GM10248 (cell line): ENCODE measurements at regions of chr19 and their contacts with region 1.

Region 1: GRCh38 chr19:12965017-12965811 is 4.2 kb upstream of the DAND5 start:
- DNase-seq: peak; percentile 88
- CTCF ChIP-seq: peak; percentile 99

Region 2: GRCh38 chr19:12872941-12873890 is 92.0 kb before region 1 on chr19:
- CTCF ChIA-PET with region 1: interaction called, 17 read pairs
- POLR2A ChIA-PET with region 1: no interaction called
- DNase-seq: peak; percentile 68
- CTCF ChIP-seq: no peak

Region 3: DNA sequence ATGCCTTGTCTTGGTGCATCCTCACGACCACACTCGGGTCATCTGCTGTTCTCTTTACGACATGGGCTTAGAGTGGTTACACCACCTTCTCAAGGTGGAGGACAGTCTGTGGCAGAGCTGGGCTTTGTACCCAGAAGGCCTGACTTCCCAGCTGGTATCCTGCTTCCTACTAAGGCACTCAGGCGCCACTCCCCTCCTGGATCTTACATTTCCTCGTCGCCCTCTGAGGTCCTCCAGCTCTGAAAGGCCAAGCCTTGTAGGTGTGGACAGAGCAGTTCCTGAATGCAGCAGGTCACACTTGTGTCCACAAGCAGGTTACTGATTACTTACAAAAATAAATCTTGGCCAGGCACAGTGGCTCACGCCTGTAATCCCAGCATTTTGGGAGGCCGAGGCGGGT is 58.0 kb before region 1 on chr19:
- CTCF ChIA-PET with region 1: interaction called, 11 read pairs
- POLR2A ChIA-PET with region 1: no interaction called
- DNase-seq: no peak
- CTCF ChIP-seq: no peak

Region 4: DNA sequence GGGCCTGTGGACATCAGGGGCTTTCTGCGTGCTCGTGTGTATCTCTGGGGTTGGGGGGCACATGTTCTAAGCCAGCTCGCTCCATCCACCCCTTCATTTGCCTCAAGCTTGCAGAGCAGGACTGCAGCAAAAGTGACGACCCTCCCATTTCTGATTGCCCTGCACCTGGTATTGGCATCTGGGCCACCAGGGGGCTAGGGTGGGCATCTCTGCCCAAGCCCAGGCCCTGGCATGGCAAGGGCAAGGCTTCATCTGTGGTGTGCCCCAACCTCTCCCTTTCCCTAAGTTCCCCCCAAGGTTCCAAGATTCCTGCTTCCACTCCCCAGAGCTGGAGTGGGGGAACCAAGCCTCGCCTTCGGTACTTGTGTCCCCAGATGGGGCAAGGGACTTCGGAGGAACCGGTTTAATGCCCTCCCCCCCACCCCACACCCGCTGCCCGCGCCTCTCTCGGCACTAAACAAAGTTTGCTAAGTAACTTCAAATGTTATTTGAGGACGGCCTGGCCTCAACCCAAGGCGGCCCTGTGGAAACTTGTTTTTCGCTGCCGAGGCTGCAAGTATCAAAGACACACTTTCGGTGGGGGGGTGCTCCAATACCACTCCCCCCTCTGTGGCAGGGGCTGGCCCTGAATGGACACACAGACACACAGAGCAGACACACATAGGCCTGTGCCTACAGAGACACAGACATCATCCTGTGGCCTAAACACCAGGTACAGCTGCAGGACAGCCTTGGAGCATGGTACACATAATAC is 42.3 kb after region 1 on chr19:
- CTCF ChIA-PET with region 1: interaction called, 11 read pairs
- POLR2A ChIA-PET with region 1: no interaction called
- DNase-seq: no peak
- CTCF ChIP-seq: no peak

Region 5: GRCh38 chr19:13060964-13061927 is 96.0 kb after region 1 on chr19:
- CTCF ChIA-PET with region 1: interaction called, 109 read pairs
- POLR2A ChIA-PET with region 1: interaction called, 3 read pairs
- DNase-seq: peak; percentile 91
- CTCF ChIP-seq: peak; percentile 96

Region 6: GRCh38 chr19:13099073-13099999 is 134.1 kb after region 1 on chr19:
- CTCF ChIA-PET with region 1: interaction called, 129 read pairs
- POLR2A ChIA-PET with region 1: no interaction called
- DNase-seq: peak; percentile 80
- CTCF ChIP-seq: no peak